ENCODE measurements at regions of chr15 and their contacts with region 1.

Region 1: GRCh38 chr15:52780172-52780980 is 9.8 kb downstream of the ONECUT1 start:
- DNase-seq: peak in 1 of 2 experiments; percentile 53
- H3K4me3 ChIP-seq: no peak overlapping the region
- H3K27ac ChIP-seq: no peak overlapping the region
- H3K4me1 ChIP-seq: no peaks in the 10 kb centered on the region
- H3K27me3 ChIP-seq: peaks cover 41% of the 10 kb centered on the region
- CTCF ChIP-seq: peak; percentile 80

Region 2: GRCh38 chr15:51768018-51768417 is 1012.4 kb before region 1 on chr15:
- CTCF ChIA-PET with region 1: no interaction called
- POLR2A ChIA-PET with region 1: no interaction called
- intact Hi-C with region 1: no loop called
- DNase-seq: no peak
- H3K4me3 ChIP-seq: no peak overlapping the region
- H3K27ac ChIP-seq: no peak overlapping the region
- H3K4me1 ChIP-seq: no peaks in the 10 kb centered on the region
- H3K27me3 ChIP-seq: no peaks in the 10 kb centered on the region
- CTCF ChIP-seq: no peak

Region 3: DNA sequence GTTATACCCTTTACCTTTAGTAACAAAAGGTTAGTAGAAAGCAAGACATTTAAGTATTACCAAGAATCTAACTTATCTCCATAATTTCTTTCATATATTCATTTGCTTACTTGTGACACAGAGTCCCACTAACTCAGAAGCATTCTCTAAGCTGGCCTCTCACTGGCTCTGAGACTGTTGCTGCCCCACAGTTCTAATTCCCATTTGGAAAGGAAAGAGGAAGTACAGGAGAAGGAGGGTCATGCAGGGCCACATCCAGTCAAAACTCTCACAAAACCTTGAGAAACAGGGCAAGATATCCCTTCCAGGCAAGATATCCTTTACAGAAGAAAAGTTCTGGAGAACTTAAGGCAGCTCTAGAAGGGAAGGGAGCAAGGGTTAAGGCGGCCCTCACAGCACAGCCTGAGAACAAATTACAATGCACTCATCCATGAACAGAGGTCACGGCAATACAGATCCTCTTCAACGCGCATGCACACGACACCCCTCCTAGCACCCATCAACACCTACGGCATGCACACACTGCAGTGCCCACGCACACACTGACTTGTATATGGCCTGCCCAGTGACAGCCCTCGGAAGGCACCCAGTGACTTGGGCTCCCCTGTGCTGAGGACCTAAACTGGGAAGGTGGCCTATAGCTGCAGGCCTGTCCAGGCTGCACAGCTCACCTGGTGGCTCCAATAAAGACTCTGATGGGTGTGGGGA is 471.8 kb before region 1 on chr15:
- CTCF ChIA-PET with region 1: no interaction called
- POLR2A ChIA-PET with region 1: no interaction called
- intact Hi-C with region 1: no loop called
- DNase-seq: no peak
- H3K4me3 ChIP-seq: no peak overlapping the region
- H3K27ac ChIP-seq: no peak overlapping the region
- H3K4me1 ChIP-seq: 0 out of 2 replicates have a peak, but pooled peaks cover 5% of the 10 kb centered on the region
- H3K27me3 ChIP-seq: no peaks in the 10 kb centered on the region
- CTCF ChIP-seq: no peak

Region 4: DNA sequence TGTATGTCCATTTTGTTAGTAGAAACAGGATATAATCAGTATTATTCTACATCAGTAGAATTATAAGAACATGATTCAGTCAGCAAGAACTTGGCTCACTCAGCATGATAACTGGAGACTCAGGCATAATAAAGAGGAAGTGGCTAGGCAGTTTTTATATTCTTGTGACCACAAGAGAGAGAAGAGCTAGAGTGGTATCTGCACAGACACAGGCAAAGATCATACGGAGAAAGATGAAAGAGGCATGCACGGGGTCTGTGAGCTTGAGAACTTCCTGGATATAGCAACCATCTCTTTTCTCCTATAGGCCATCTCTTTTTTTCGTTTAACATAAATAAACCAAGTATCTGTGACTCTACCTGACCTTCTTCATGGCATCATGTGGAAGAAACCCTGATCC is 298.5 kb before region 1 on chr15:
- CTCF ChIA-PET with region 1: no interaction called
- POLR2A ChIA-PET with region 1: no interaction called
- intact Hi-C with region 1: no loop called
- DNase-seq: no peak
- H3K4me3 ChIP-seq: no peak overlapping the region
- H3K27ac ChIP-seq: no peak overlapping the region
- H3K4me1 ChIP-seq: no peaks in the 10 kb centered on the region
- H3K27me3 ChIP-seq: no peaks in the 10 kb centered on the region
- CTCF ChIP-seq: no peak

Region 5: DNA sequence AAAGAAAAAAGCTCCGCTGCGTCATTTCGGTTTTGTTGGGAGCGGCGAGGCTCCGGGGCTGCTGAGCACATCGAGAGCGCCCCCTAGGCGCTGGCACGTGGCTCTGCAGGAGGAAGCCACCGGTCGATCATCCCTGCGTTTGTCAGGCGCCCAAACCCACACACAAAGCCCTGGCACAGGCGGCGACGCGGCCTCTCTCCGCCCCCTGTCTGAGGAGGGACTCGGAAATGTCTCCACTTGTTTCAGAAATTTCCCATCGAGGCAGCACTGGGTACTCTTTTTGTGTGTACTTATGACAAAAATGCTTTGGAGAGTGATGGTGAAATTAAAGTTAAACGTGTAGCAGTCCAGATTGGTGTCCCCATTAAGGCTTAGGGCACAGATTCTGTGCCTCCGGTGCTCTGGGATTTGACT is 417.1 kb after region 1 on chr15:
- CTCF ChIA-PET with region 1: no interaction called
- POLR2A ChIA-PET with region 1: no interaction called
- intact Hi-C with region 1: loop called (anchors 2 kb)
- DNase-seq: peak in 1 of 2 experiments; percentile 33
- H3K4me3 ChIP-seq: no peak overlapping the region
- H3K27ac ChIP-seq: no peak overlapping the region
- H3K4me1 ChIP-seq: no peaks in the 10 kb centered on the region
- H3K27me3 ChIP-seq: no peaks in the 10 kb centered on the region
- CTCF ChIP-seq: peak; percentile 79

Region 6: GRCh38 chr15:53716909-53717876 is 936.8 kb after region 1 on chr15:
- CTCF ChIA-PET with region 1: no interaction called
- POLR2A ChIA-PET with region 1: no interaction called
- intact Hi-C with region 1: loop called (anchors 5 kb)
- DNase-seq: no peak
- H3K4me3 ChIP-seq: no peak overlapping the region
- H3K27ac ChIP-seq: no peak overlapping the region
- H3K4me1 ChIP-seq: no peaks in the 10 kb centered on the region
- H3K27me3 ChIP-seq: no peaks in the 10 kb centered on the region
- CTCF ChIP-seq: peak; percentile 40